Calu3 (cell line): ENCODE measurements at regions of chr5 and their contacts with region 1.

Region 1: GRCh38 chr5:91383027-91383955 is at the start of gene ARRDC3:
- DNase-seq: peak; percentile 98
- H3K4me3 Mint-ChIP-seq: peak within 1 kb of the TSS; percentile 86
- H3K27ac Mint-ChIP-seq: peak within 1 kb of the TSS; percentile 98
- H3K4me1 Mint-ChIP-seq: peaks cover 14% of the 10 kb centered on the region
- H3K27me3 Mint-ChIP-seq: no peaks in the 10 kb centered on the region
- CTCF ChIP-seq: no peak
- total RNA-seq, gene ARRDC3: 32.9 and 33.4 TPM in 2 replicates

Region 2: DNA sequence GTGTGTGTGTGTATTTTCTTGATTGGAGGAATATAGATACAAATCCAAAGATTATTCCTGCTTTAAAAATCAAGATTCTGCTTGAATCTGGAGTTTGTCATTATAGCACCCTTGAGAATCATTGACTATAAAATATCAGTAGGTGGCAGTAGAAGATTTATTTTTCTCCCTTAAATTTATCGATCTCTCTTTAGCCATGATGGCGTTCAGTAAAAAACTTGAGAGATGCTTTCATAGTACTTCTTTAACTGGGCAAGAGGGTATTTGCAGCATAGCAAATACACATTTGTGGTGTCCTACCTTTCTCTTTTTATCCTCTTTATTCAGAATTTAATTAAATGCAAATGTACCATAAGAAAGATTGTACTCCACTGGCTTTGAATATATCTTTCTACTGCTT is 517.0 kb before region 1 on chr5:
- CTCF ChIA-PET with region 1: interaction called, 14 read pairs
- intact Hi-C with region 1: loop called (anchors 1 kb)
- DNase-seq: no peak
- H3K4me3 Mint-ChIP-seq: no peak overlapping the region
- H3K27ac Mint-ChIP-seq: no peak overlapping the region
- H3K4me1 Mint-ChIP-seq: peaks cover 10% of the 10 kb centered on the region
- H3K27me3 Mint-ChIP-seq: no peaks in the 10 kb centered on the region
- CTCF ChIP-seq: peak; percentile 64

Region 3: DNA sequence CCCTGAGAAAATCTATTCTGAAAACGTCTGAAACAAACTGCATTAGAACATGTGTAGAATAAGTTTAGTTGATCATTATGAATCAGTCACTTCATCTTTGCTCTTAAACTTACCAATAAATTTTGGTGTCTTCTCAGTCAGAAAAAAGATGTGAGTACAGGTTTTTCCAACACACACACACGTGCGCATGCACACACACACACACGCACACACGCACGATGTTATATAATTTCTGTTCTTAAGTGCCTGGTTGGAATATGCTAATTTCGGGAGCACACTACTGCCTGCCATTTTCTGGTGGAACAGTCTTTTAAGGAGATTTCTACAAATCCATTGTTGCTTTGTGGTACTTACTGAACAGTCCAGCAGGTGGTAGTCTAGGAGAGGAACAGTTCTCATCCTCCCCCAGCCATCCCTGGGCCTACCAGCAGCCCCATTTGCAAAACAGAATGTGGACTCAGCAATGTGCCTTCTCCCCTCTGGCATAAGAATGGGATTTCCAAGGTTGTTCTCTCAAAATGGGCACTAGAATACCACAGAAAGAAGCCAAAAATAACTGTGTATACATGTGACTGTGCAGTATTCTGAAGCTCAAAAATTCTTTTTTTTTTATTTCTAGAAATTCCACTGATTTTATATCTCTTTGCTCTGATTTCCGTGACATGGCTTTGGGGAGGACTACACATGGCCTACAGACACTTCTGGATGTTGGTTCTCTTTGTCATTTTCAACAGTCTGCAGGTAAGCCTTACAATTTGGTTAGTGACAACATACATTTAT is 281.5 kb before region 1 on chr5:
- CTCF ChIA-PET with region 1: interaction called, 5 read pairs
- intact Hi-C with region 1: loop called (anchors 1 kb)
- DNase-seq: peak; percentile 80
- H3K4me3 Mint-ChIP-seq: no peak overlapping the region
- H3K27ac Mint-ChIP-seq: no peak overlapping the region
- H3K4me1 Mint-ChIP-seq: peaks cover 10% of the 10 kb centered on the region
- H3K27me3 Mint-ChIP-seq: no peaks in the 10 kb centered on the region
- CTCF ChIP-seq: peak; percentile 86

Region 4: DNA sequence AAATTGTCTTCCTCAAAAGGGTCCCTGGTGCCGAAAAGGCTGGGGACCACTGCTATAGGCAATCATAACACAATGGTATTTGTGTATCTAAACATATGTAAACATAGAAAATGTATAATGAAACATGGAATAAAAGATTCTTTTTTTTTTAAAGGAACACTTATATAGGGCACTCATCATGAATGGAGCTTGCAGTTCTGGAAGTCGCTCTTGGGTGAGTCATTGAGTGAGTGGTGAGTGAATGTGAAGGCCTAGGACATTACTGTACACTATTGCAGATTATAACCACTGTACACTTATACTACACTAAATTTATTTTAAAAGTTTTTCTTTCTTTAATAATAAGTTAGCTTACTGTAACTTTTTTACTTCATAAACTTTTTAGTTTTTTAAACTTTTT is 176.6 kb before region 1 on chr5:
- CTCF ChIA-PET with region 1: no interaction called
- intact Hi-C with region 1: no loop called
- DNase-seq: no peak
- H3K4me3 Mint-ChIP-seq: no peak overlapping the region
- H3K27ac Mint-ChIP-seq: no peak overlapping the region
- H3K4me1 Mint-ChIP-seq: no peaks in the 10 kb centered on the region
- H3K27me3 Mint-ChIP-seq: no peaks in the 10 kb centered on the region
- CTCF ChIP-seq: no peak

Region 5: DNA sequence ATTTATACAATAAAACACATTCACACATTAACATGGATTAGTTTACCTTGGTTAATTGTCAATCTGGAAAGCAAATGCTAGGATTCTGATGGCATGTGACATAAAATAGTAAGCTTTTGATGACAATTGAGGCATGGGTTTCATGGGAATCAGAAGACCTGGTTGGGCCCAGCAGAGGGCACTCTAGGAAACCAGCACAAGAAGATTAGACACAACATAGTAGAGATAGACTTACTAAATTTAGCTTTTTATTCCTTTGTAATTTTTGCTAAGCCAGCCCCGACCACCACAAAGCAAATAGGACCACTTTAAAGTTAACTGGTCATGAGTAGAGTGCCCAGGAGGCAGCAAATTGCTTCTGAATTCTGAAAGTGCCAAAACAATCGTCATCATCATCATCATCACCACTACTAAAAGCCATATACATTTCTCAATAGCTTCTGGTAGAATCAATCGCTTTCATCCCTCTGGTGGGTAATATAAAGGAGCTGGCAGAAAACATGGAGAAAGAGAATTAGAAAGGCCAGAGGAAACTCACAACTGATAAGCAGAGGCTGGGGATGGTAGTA is 163.4 kb before region 1 on chr5:
- CTCF ChIA-PET with region 1: interaction called, 35 read pairs
- intact Hi-C with region 1: no loop called
- DNase-seq: peak; percentile 56
- H3K4me3 Mint-ChIP-seq: no peak overlapping the region
- H3K27ac Mint-ChIP-seq: peak overlapping the region; percentile 51
- H3K4me1 Mint-ChIP-seq: peaks cover 45% of the 10 kb centered on the region
- H3K27me3 Mint-ChIP-seq: no peaks in the 10 kb centered on the region
- CTCF ChIP-seq: peak; percentile 32

Region 6: DNA sequence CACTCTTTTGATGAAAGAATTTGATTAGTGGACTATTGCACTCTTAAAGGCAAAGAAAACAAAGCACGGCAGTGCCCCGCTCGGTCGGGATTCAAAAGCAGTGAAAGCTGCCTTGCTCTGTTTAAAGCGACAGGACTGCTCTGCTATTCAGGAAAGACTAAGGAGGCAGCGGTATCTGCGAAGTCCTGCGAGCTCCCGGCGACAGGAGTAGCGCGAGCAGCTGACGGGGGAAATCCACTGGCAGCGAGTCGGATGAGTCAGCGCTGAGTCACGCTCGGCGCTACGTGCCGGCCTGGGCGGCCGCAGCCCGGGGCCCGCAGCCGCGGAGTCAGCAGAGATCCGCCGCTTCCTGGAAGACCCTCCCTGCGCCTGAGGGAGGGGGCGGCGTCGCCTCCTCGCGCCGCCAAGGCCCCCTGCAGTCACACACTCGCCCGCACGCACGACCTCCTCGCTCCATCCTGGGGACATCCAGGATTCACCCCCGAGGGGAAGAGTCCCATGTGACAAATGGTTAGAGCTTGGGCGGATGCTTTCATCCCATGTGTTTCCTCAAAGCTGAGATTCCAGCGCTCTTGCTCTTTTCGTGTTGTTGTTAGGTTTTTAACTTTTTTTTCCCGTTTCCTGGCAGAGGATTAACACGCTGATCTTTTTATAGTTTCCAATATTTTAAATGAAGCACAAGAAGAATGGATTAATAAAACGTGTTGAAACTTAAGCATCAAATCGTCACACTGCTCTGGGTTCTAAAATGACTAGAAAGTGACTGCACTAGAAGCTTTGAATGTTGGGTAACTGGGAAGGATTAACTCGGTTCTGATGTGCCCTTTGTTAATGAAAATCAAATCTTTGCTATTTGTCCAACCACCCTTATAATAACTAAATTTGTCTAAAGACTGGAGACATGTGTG is 102.7 kb before region 1 on chr5:
- CTCF ChIA-PET with region 1: interaction called, 9 read pairs
- intact Hi-C with region 1: loop called (anchors 5 kb)
- DNase-seq: peak; percentile 95
- H3K4me3 Mint-ChIP-seq: peak overlapping the region; percentile 91
- H3K27ac Mint-ChIP-seq: peak overlapping the region; percentile 98
- H3K4me1 Mint-ChIP-seq: peaks cover 51% of the 10 kb centered on the region
- H3K27me3 Mint-ChIP-seq: no peaks in the 10 kb centered on the region
- CTCF ChIP-seq: no peak

Region 7: GRCh38 chr5:91419571-91420537 is 36.6 kb after region 1 on chr5:
- CTCF ChIA-PET with region 1: interaction called, 25 read pairs
- intact Hi-C with region 1: no loop called
- DNase-seq: peak; percentile 77
- H3K4me3 Mint-ChIP-seq: no peak overlapping the region
- H3K27ac Mint-ChIP-seq: no peak overlapping the region
- H3K4me1 Mint-ChIP-seq: peaks cover 31% of the 10 kb centered on the region
- H3K27me3 Mint-ChIP-seq: no peaks in the 10 kb centered on the region
- CTCF ChIP-seq: peak; percentile 79

Region 8: DNA sequence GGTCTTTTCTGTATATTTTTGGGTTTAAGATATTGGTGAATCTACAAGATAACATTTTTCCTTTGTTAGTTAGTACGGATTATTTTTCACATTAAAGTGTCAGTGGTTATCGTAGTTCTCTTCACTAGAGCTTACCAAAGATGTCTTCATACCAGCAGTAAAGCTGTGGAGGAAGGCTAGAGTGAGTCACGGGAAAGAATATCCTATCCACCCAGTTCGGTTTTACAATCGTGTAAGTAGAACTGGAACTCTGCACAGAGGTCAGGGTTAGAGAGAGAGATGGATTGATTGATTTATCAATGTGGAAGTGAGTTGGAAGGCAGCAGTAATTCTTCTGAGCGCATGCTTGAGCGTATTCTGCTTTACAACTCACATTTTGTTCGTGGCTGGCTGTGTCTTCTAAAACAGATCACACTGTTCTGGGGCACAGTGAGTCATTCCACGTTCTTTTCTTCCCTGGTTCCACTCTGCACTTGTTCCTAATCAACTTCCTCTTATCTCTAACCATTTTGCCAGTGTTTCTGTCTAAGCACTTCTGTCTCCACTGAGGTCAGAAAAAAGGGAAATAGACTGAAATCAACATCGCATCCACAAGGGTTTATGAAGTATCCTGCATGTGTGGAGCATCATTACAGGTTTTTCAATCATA is 86.3 kb after region 1 on chr5:
- CTCF ChIA-PET with region 1: no interaction called
- intact Hi-C with region 1: no loop called
- DNase-seq: no peak
- H3K4me3 Mint-ChIP-seq: peak overlapping the region; percentile 43
- H3K27ac Mint-ChIP-seq: peak overlapping the region; percentile 52
- H3K4me1 Mint-ChIP-seq: peaks cover 29% of the 10 kb centered on the region
- H3K27me3 Mint-ChIP-seq: no peaks in the 10 kb centered on the region
- CTCF ChIP-seq: no peak